ENCODE measurements at regions of chr14 and their contacts with region 1.

Region 1: GRCh38 chr14:106308839-106309389 is 782.5 kb downstream of the TMEM121 start:
- DNase-seq: peak; percentile 83
- ATAC-seq: peak; percentile 99
- H3K4me3 ChIP-seq: no peak overlapping the region
- H3K27ac ChIP-seq: no peak overlapping the region
- H3K4me1 ChIP-seq: peaks cover 6% of the 10 kb centered on the region
- H3K27me3 ChIP-seq: no peaks in the 10 kb centered on the region
- CTCF ChIP-seq: peak; percentile 85 to 100 (median 100); a peak in 5 of 6 replicates
- EP300 ChIP-seq: no peak
- POLR2A ChIP-seq: no peak
- RAD21 ChIP-seq: peak; percentile 50

Region 2: DNA sequence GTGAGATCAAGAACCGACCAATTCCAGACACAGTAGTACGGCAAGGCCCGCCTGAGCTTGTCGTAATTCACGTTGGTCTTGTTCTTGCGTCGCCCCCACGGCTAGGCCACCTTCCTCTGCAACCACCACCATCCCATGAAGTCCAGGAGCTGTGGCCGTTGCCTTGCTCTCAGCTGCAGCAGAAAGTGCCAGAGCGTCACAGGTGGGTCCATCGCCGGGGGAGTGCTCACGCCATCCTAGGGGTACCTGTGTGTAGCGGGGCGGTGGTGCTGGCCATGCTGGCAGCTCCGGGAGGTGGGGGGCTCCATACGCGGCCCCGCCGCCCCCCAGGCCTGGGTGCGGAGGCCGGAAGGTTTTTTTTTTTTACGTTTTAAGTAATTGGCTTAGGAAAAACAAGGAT is 759.4 kb before region 1 on chr14:
- CTCF ChIA-PET with region 1: interaction called, 7 read pairs
- POLR2A ChIA-PET with region 1: no interaction called
- RAD21 ChIA-PET with region 1: no interaction called
- SMC1A ChIA-PET with region 1: no interaction called
- in situ Hi-C with region 1: no loop called
- intact Hi-C with region 1: loop called (anchors 10 kb)
- DNase-seq: no peak
- ATAC-seq: no peak
- H3K4me3 ChIP-seq: no peak overlapping the region
- H3K27ac ChIP-seq: no peak overlapping the region
- H3K4me1 ChIP-seq: no peaks in the 10 kb centered on the region
- H3K27me3 ChIP-seq: peaks cover 0 to under 1% of the 10 kb centered on the region in 2 experiments; a peak in 1 of 4 replicates
- CTCF ChIP-seq: no peak
- EP300 ChIP-seq: no peak
- POLR2A ChIP-seq: no peak
- RAD21 ChIP-seq: no peak

Region 3: GRCh38 chr14:105666420-105666819 is 642.5 kb before region 1 on chr14:
- CTCF ChIA-PET with region 1: interaction called, 4 read pairs
- POLR2A ChIA-PET with region 1: no interaction called
- RAD21 ChIA-PET with region 1: no interaction called
- SMC1A ChIA-PET with region 1: no interaction called
- in situ Hi-C with region 1: loop called (anchors 10 kb)
- intact Hi-C with region 1: no loop called
- DNase-seq: no peak
- ATAC-seq: no peak
- H3K4me3 ChIP-seq: no peak overlapping the region
- H3K27ac ChIP-seq: no peak overlapping the region
- H3K4me1 ChIP-seq: no peaks in the 10 kb centered on the region
- H3K27me3 ChIP-seq: no peaks in the 10 kb centered on the region
- CTCF ChIP-seq: no peak
- EP300 ChIP-seq: no peak
- POLR2A ChIP-seq: no peak
- RAD21 ChIP-seq: no peak

Region 4: DNA sequence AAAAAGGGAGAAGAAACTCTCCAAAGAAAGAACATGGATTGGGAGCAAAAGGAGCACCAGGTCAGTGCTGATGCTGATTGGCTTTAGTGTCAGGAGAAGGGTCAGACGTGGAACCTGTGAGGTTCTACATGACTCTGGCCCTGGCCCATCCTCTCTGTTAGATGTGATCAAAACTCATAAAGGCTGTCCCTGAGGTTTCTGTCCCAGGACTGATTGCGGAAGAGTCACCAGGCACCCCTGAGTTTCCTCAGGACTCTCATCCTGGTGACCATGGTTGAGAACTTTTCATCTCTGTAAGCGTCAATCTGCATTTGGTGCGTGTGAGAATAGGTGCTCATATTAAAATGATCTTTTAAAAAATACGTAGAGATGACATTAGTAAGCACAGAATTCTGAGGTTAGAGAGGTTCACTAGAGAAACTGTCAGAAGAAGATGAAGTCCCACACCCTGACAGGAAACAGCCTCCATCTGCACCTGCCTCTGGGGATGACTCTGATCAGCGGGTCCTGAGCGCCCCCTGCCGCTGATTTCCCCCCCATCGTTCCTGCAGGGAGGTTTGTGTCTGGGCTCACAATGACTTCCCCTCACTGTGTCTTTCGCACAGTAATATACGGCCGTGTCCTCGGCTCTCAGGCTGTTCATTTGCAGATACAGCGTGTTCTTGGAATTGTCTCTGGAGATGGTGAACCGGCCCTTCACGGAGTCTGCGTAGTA is 40.7 kb before region 1 on chr14:
- CTCF ChIA-PET with region 1: interaction called, 17 read pairs
- POLR2A ChIA-PET with region 1: no interaction called
- RAD21 ChIA-PET with region 1: interaction called, 3 read pairs
- SMC1A ChIA-PET with region 1: interaction called, 5 read pairs
- in situ Hi-C with region 1: no loop called
- intact Hi-C with region 1: loop called (anchors 5 kb)
- DNase-seq: no peak
- ATAC-seq: no peak
- H3K4me3 ChIP-seq: no peak overlapping the region
- H3K27ac ChIP-seq: no peak overlapping the region
- H3K4me1 ChIP-seq: no peaks in the 10 kb centered on the region
- H3K27me3 ChIP-seq: peaks cover 0 to 8% of the 10 kb centered on the region in 2 experiments; a peak in 2 of 4 replicates
- CTCF ChIP-seq: peak; percentile 30 to 65 (median 45); a peak in 5 of 6 replicates
- EP300 ChIP-seq: no peak
- POLR2A ChIP-seq: no peak
- RAD21 ChIP-seq: peak; percentile 73

Region 5: GRCh38 chr14:106286697-106287290 is 22.1 kb before region 1 on chr14:
- CTCF ChIA-PET with region 1: interaction called, 274 read pairs
- POLR2A ChIA-PET with region 1: no interaction called
- RAD21 ChIA-PET with region 1: interaction called, 5 read pairs
- SMC1A ChIA-PET with region 1: interaction called, 16 read pairs
- in situ Hi-C with region 1: no loop called
- intact Hi-C with region 1: no loop called
- DNase-seq: no peak
- ATAC-seq: peak; percentile 74
- H3K4me3 ChIP-seq: no peak overlapping the region
- H3K27ac ChIP-seq: no peak overlapping the region
- H3K4me1 ChIP-seq: no peaks in the 10 kb centered on the region
- H3K27me3 ChIP-seq: no peaks in the 10 kb centered on the region; a peak in 1 of 4 replicates
- CTCF ChIP-seq: peak; percentile 45 to 69 (median 52); a peak in 5 of 6 replicates
- EP300 ChIP-seq: no peak
- POLR2A ChIP-seq: no peak
- RAD21 ChIP-seq: peak; percentile 26; the same call in 1 of the 2 replicates

Region 6: DNA sequence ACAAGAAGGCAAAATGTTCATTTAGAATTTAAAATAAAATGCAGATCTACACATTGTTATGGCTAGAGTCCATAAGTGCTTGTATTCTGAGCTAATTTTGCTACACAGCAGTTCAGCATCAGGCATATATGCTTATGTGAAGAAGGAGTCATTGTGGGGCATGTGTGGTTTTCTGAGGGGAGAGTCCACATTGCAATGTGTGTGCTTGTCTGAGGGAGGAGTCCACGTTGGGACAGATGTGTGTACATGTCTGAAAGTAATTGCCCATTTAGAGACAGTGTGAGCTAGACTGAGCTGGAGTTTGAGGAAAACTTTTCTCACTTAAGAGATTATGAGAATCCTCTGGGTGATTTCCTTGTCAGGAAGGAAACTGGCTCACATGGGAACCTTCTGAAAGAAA is 14.6 kb before region 1 on chr14:
- CTCF ChIA-PET with region 1: interaction called, 274 read pairs
- POLR2A ChIA-PET with region 1: no interaction called
- RAD21 ChIA-PET with region 1: interaction called, 10 read pairs
- SMC1A ChIA-PET with region 1: interaction called, 16 read pairs
- in situ Hi-C with region 1: no loop called
- intact Hi-C with region 1: no loop called
- DNase-seq: no peak
- ATAC-seq: no peak; the same call in 2 of the 3 replicates
- H3K4me3 ChIP-seq: no peak overlapping the region
- H3K27ac ChIP-seq: no peak overlapping the region
- H3K4me1 ChIP-seq: no peaks in the 10 kb centered on the region; the same call in 1 of the 2 replicates
- H3K27me3 ChIP-seq: no peaks in the 10 kb centered on the region; a peak in 1 of 4 replicates
- CTCF ChIP-seq: no peak
- EP300 ChIP-seq: no peak
- POLR2A ChIP-seq: no peak
- RAD21 ChIP-seq: no peak

Region 7: DNA sequence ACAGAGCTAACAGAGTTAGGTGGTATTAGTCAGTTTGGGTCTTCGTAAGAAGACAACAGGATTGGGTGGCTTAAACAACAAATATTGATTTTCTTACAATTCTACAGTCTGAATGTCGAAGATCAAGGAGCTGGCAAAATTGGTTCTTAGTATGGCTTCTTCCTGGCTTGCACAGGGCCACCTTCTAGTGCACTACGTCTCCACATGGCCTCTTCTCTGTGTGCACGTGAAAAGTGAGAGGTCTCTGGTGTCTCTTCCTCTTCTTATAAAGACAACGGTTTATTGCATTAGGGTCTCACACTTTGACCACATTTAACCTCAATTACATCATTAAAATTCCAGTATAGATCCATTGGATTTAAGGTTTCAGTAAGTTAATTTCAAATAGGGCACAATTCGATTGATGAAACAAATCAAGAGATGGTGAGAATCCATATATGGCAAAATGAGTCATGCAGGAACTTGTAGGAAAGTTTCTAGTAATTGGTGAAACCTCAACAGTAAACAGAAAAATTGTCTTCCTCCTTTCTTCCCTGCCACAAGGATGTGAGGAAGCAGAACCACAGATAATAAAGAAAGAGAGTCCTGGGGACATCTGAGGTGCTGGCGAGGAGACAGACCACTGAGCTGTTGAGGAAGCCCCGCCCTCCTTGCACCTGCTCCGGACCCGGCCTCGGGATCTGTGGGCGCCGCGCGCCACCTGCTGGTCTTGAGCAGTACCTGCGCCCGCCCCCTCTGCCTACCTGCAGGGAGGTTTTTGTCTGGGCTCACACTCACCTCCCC is 64.1 kb after region 1 on chr14:
- CTCF ChIA-PET with region 1: interaction called, 66 read pairs
- POLR2A ChIA-PET with region 1: no interaction called
- RAD21 ChIA-PET with region 1: interaction called, 13 read pairs
- SMC1A ChIA-PET with region 1: interaction called, 34 read pairs
- in situ Hi-C with region 1: no loop called
- intact Hi-C with region 1: loop called (anchors 1 kb)
- DNase-seq: no peak
- ATAC-seq: peak; percentile 99
- H3K4me3 ChIP-seq: no peak overlapping the region
- H3K27ac ChIP-seq: no peak overlapping the region
- H3K4me1 ChIP-seq: peaks cover 6% of the 10 kb centered on the region; the same call in 1 of the 2 replicates
- H3K27me3 ChIP-seq: no peaks in the 10 kb centered on the region; a peak in 2 of 4 replicates
- CTCF ChIP-seq: peak; percentile 86 to 93 (median 89)
- EP300 ChIP-seq: 0 out of 4 replicates have a peak, but pooled peaks of 1 of the 2 experiments have one; percentile 9
- POLR2A ChIP-seq: no peak
- RAD21 ChIP-seq: peak; percentile 88

Measured in GM12878 (cell line).